ENCODE measurements at regions of chr2 and their contacts with region 1.

Region 1: DNA sequence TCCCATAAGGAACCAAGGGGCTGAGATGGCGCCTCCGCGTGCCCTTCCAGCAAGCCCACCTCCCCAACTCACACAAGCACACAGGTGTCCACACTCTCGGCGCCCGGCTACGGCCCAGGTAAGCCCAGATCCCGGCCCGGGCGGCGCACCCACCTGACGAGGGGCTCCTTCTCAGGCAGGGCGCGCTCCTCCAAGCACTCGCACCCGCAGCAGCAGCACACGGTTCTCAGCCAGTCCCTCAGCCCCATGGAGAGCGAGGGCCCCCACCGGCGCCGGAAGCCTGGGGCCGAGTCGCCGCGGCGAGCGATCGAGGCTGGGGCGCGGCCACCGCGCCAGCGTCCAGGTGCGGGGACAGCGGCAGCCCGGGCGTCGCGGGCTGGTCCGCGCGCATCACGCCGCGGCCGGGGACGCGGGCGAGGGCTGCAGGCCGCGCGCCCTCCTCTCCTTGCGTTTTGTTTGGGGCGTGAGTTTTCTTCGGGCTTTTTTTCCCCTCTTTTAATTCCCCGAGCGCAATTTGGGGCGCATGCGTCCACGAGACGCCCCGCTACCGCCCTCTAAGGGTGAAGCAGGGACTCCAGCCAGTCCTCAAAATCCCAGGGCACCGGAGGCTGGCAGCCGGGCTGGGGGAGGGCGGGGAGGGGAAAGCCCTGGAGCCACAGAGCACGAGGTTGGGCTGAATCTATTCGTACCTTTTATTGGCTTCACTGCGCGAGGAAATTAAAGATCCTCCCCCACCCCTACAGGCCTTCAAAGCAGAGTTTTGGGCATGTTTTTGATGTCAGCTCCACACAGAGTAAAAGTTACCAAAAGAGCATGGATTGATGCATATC is at the start of gene MREG:
- DNase-seq: peak; percentile 91
- H3K4me3 Mint-ChIP-seq: peak within 1 kb of the TSS; percentile 88
- H3K27ac Mint-ChIP-seq: peak within 1 kb of the TSS; percentile 46
- H3K4me1 Mint-ChIP-seq: peaks cover 50% of the 10 kb centered on the region
- H3K27me3 Mint-ChIP-seq: no peaks in the 10 kb centered on the region
- total RNA-seq, gene MREG: 10.2 to 10.4 TPM

Region 2: GRCh38 chr2:215311625-215312396 is 701.5 kb before region 1 on chr2 and contains the start of gene ATIC:
- CTCF ChIA-PET with region 1: no interaction called
- POLR2A ChIA-PET with region 1: no interaction called
- intact Hi-C with region 1: loop called (anchors 10 kb)
- DNase-seq: peak; percentile 95
- H3K4me3 Mint-ChIP-seq: peak within 1 kb of the TSS; percentile 91
- H3K27ac Mint-ChIP-seq: peak within 1 kb of the TSS; percentile 88
- H3K4me1 Mint-ChIP-seq: peaks cover 31% of the 10 kb centered on the region
- H3K27me3 Mint-ChIP-seq: no peaks in the 10 kb centered on the region
- total RNA-seq, gene ATIC: 256 to 261 TPM

Region 3: GRCh38 chr2:215749092-215749957 is 264.0 kb before region 1 on chr2:
- CTCF ChIA-PET with region 1: no interaction called
- POLR2A ChIA-PET with region 1: no interaction called
- intact Hi-C with region 1: loop called (anchors 10 kb)
- DNase-seq: no peak
- H3K4me3 Mint-ChIP-seq: no peak overlapping the region
- H3K27ac Mint-ChIP-seq: no peak overlapping the region
- H3K4me1 Mint-ChIP-seq: peaks cover 61% of the 10 kb centered on the region
- H3K27me3 Mint-ChIP-seq: no peaks in the 10 kb centered on the region

Region 4: DNA sequence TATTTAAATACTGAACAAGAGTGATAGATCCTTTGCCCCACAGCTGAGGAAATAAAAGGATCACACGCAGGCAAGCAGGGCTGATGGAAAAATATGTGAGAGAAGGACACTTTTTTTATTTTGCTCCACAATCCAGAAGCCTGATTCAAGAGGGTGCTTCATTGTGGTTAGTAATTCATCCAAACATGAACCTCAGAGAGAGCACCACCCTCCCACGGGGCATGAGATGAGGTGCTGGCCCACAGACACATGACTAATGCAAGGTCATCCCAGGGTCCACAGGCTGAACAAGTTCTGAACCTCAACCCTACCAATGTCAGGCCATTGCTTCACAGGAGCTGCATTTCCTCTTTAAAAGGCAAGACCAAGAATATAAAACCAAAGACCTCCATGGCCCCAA is 239.6 kb before region 1 on chr2:
- CTCF ChIA-PET with region 1: no interaction called
- POLR2A ChIA-PET with region 1: no interaction called
- intact Hi-C with region 1: no loop called
- DNase-seq: peak; percentile 12
- H3K4me3 Mint-ChIP-seq: no peak overlapping the region
- H3K27ac Mint-ChIP-seq: no peak overlapping the region
- H3K4me1 Mint-ChIP-seq: no peaks in the 10 kb centered on the region
- H3K27me3 Mint-ChIP-seq: peaks cover 7% of the 10 kb centered on the region

Region 5: GRCh38 chr2:215970425-215970824 is 42.9 kb before region 1 on chr2:
- CTCF ChIA-PET with region 1: no interaction called
- POLR2A ChIA-PET with region 1: no interaction called
- intact Hi-C with region 1: loop called (anchors 1 kb)
- DNase-seq: peak; percentile 61
- H3K4me3 Mint-ChIP-seq: no peak overlapping the region
- H3K27ac Mint-ChIP-seq: peak overlapping the region; percentile 58
- H3K4me1 Mint-ChIP-seq: peaks cover 20% of the 10 kb centered on the region
- H3K27me3 Mint-ChIP-seq: no peaks in the 10 kb centered on the region

Region 6: GRCh38 chr2:216339808-216340631 is 326.7 kb after region 1 on chr2:
- CTCF ChIA-PET with region 1: no interaction called
- POLR2A ChIA-PET with region 1: no interaction called
- intact Hi-C with region 1: loop called (anchors 10 kb)
- DNase-seq: no peak
- H3K4me3 Mint-ChIP-seq: no peak overlapping the region
- H3K27ac Mint-ChIP-seq: no peak overlapping the region
- H3K4me1 Mint-ChIP-seq: peaks cover 12% of the 10 kb centered on the region
- H3K27me3 Mint-ChIP-seq: no peaks in the 10 kb centered on the region